Calu3 (cell line): ENCODE measurements at regions of chrX and their contacts with region 1.

Region 1: GRCh38 chrX:138745196-138745595 is 33.7 kb upstream of the FGF13 start:
- DNase-seq: peak; percentile 46
- H3K4me3 Mint-ChIP-seq: no peak overlapping the region
- H3K27ac Mint-ChIP-seq: no peak overlapping the region
- H3K4me1 Mint-ChIP-seq: no peaks in the 10 kb centered on the region
- H3K27me3 Mint-ChIP-seq: no peaks in the 10 kb centered on the region
- CTCF ChIP-seq: no peak

Region 2: DNA sequence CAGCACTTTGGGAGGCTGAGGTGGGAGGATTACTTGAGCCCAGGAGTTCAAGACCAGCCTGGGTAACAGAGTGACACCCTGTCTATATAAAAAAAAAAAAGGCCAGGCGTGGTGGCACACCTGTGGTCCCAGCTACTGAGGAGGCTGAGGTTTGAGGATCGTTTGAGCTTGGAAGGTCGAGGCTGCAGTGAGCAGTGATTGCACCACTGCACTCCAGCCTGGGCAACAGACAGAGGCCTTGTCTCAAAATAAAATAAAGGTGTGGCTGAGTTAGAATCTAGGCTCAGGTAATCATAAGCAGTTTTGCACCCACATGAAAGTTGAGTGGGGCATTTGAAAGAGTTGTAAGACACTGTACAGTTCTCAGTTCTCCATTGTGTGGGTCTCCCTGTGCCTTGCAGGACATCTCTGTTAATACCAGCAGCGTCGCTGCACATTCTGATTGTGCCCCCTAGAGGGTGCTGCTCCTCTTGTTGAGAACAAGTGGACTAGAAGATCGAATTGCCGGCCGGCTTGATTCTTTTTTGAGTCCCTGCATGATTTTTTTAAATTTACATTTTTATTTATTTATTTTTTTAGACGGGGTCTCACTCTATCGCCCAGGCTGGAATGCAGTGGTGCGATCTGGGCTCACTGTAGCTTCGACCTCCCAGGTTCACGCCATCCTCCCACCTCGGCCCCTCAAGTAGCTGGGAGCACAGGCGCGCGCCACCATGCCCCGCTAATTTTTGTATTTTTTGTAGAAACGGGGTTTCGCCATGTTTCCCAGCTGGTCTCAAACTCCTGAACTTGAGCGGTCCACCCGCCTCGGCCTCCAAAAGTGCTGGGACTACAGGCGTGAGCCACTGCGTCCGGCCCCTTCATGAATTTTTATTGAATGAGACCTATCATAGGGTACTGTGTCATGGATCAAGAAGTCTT is 1791.1 kb before region 1 on chrX:
- CTCF ChIA-PET with region 1: no interaction called
- intact Hi-C with region 1: loop called (anchors 10 kb)
- DNase-seq: peak; percentile 65
- H3K4me3 Mint-ChIP-seq: no peak overlapping the region
- H3K27ac Mint-ChIP-seq: no peak overlapping the region
- H3K4me1 Mint-ChIP-seq: no peaks in the 10 kb centered on the region
- H3K27me3 Mint-ChIP-seq: no peaks in the 10 kb centered on the region
- CTCF ChIP-seq: peak; percentile 43

Region 3: GRCh38 chrX:138128027-138128671 is 617.0 kb before region 1 on chrX:
- CTCF ChIA-PET with region 1: no interaction called
- intact Hi-C with region 1: loop called (anchors 1 kb)
- DNase-seq: peak; percentile 7
- H3K4me3 Mint-ChIP-seq: no peak overlapping the region
- H3K27ac Mint-ChIP-seq: no peak overlapping the region
- H3K4me1 Mint-ChIP-seq: no peaks in the 10 kb centered on the region
- H3K27me3 Mint-ChIP-seq: no peaks in the 10 kb centered on the region
- CTCF ChIP-seq: peak; percentile 23

Region 4: DNA sequence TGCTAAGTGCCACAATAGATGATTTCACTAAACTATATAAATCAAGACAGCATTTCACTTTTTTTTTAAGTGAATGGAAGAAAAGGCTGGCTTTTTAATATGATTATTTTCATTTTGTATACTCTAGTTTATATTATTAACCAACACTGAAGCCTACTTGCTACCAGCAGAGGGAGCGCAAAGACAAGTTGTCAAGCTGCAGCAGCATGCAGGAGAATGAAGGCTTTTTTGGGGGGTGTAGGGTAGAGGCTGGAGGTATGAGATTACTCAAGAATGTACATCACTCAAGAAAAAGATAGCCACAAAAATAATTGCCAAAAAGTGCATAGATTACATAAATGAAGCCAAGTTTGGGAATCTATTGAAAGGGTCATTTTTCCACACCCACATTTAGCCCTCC is 553.2 kb before region 1 on chrX:
- CTCF ChIA-PET with region 1: no interaction called
- intact Hi-C with region 1: loop called (anchors 1 kb)
- DNase-seq: peak; percentile 21
- H3K4me3 Mint-ChIP-seq: no peak overlapping the region
- H3K27ac Mint-ChIP-seq: no peak overlapping the region
- H3K4me1 Mint-ChIP-seq: no peaks in the 10 kb centered on the region
- H3K27me3 Mint-ChIP-seq: no peaks in the 10 kb centered on the region
- CTCF ChIP-seq: no peak

Region 5: DNA sequence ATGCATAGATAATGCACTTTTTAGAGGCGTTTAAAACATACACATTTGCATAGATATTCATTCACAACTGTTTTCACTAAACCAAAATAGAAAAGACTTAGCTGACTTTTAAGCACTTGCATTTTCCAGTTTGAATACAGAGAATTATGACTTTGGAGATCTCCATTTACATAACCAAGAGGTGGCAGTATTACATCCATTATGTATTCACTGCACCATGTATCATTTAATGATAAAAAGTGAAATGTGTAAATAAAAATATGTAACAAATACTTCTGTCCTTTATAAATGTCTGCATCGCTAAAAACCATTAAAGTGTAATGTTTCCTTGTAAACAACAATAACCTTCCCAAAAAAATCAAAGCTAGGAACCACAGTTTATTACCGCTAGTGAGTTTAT is 446.9 kb before region 1 on chrX:
- CTCF ChIA-PET with region 1: no interaction called
- intact Hi-C with region 1: loop called (anchors 10 kb)
- DNase-seq: no peak
- H3K4me3 Mint-ChIP-seq: no peak overlapping the region
- H3K27ac Mint-ChIP-seq: no peak overlapping the region
- H3K4me1 Mint-ChIP-seq: no peaks in the 10 kb centered on the region
- H3K27me3 Mint-ChIP-seq: no peaks in the 10 kb centered on the region
- CTCF ChIP-seq: no peak

Region 6: GRCh38 chrX:138711399-138712347 is 33.5 kb before region 1 on chrX and contains the start of gene FGF13:
- CTCF ChIA-PET with region 1: interaction called, 12 read pairs
- intact Hi-C with region 1: no loop called
- DNase-seq: no peak
- H3K4me3 Mint-ChIP-seq: no peak within 1 kb of the TSS
- H3K27ac Mint-ChIP-seq: no peak within 1 kb of the TSS
- H3K4me1 Mint-ChIP-seq: no peaks in the 10 kb centered on the region
- H3K27me3 Mint-ChIP-seq: peaks cover 12% of the 10 kb centered on the region
- CTCF ChIP-seq: no peak
- total RNA-seq, gene FGF13: not detected in 2 replicates